ENCODE measurements at regions of chr5 and their contacts with region 1.

Region 1: DNA sequence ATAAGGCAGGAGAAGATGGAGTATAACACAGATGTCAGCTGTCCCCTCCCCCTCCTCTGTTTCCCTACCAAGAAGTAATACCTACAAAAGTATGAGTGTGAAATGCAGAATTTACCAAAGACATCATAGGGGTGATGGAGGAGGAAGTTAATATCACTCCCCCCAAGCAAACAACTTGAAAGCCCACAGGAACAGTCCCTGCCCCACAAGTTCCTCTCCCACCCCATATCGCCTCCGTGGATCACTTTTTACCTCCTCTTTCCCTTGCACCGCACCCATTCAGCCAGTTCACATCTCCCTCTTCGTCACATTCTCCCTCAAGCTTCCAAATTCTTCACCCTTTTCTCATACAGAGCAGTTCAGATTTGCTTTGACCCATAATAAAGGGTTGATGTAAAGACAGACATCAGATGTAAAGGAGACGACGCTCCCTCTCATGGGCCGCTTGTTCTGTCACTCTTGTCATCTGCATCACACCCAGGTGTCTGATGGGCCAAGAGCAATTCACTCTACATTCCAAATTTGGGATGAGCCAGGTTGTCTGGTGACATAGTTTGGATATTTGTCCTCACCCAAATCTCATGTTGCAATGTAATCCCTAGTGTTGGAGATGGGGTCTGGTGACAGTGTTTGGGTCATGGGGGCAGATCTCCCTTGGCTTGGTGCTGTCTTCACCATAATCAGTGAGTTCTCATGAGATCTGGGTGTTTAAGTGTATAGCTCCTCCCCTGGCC is 7.1 kb upstream of the SIL1 start:
- DNase-seq: no peak
- ATAC-seq: no peak

Region 2: GRCh38 chr5:137695651-137696428 is 1509.5 kb before region 1 on chr5:
- intact Hi-C with region 1: no loop called
- DNase-seq: no peak
- ATAC-seq: peak; percentile 63

Region 3: GRCh38 chr5:139164020-139164419 is 41.3 kb before region 1 on chr5:
- intact Hi-C with region 1: loop called (anchors 1 kb)
- DNase-seq: no peak
- ATAC-seq: no peak

Region 4: GRCh38 chr5:139232147-139232724 is 26.9 kb after region 1 on chr5:
- intact Hi-C with region 1: no loop called
- DNase-seq: no peak
- ATAC-seq: no peak